CD8-positive, alpha-beta memory T cell (primary cell): ENCODE measurements at regions of chr2 and their contacts with region 1.

Region 1: DNA sequence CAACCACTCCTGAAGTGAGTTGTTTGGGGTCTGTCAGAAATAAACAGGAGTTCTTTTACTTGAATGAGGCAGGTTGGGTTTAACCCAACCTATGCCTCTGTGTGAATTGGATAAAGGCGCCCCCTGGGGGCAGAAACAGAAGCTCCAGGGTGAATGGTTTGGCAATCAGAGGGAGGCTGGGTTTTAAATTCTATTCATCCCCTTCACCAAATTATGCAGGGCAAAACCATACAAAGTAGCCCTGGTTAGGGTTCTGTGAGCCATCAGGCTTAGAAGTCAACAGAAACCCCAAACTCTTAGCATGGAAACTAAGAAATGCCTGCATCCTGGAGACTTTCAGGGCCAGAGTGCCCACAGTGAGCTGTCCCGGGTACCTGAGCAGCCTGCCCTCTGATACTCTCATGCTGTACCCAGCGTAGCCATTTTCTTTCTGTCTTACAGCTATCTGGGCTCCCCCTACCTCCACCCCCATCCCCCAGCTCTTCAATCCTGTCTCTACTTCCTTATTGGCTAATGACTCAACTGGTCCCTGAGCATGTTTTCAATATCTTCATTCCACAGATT is 241.5 kb downstream of the ICOS start:
- DNase-seq: peak; percentile 40 to 74 (median 49)
- H3K4me3 ChIP-seq: no peak overlapping the region
- H3K4me3 Mint-ChIP-seq: no peak overlapping the region
- H3K27ac ChIP-seq: no peak overlapping the region
- H3K27ac Mint-ChIP-seq: no peak overlapping the region
- H3K4me1 ChIP-seq: no peaks in the 10 kb centered on the region
- H3K4me1 Mint-ChIP-seq: no peaks in the 10 kb centered on the region
- H3K27me3 ChIP-seq: no peaks in the 10 kb centered on the region
- H3K27me3 Mint-ChIP-seq: peaks cover 18 to 31% of the 10 kb centered on the region in 2 donors

Region 2: DNA sequence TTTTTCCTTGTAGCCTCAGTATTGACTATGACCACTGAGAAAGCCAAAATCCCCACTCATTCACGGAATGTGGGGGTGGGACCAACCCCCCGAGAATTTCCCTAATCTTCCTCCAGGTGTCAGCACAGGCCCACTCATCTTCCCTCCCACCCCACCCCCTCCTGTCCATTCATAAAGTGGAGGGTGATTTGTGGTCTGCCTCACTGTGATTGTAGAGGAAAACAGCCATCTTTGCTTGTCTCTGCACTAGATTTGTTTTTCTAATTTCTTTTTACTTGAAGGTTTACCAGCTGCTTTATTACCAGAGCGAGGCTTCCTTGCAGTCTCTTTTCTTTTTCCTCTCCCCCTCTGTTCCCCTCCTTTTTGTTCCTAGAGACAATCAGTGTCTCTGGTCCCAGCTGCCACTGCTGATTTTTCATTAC is 69.7 kb before region 1 on chr2:
- CTCF ChIA-PET with region 1: interaction called, 43 read pairs
- POLR2A ChIA-PET with region 1: no interaction called
- DNase-seq: peak; percentile 12 to 54 (median 51)
- H3K4me3 ChIP-seq: peak overlapping the region; percentile 13
- H3K4me3 Mint-ChIP-seq: peak overlapping the region; percentile 40 to 89 (median 81)
- H3K27ac ChIP-seq: no peak overlapping the region
- H3K27ac Mint-ChIP-seq: peak overlapping the region in 3 of 8 donors; percentile 11 to 83 (median 29)
- H3K4me1 ChIP-seq: peaks cover 32% of the 10 kb centered on the region
- H3K4me1 Mint-ChIP-seq: peaks cover 32 to 39% (median 36%) of the 10 kb centered on the region in 3 donors
- H3K27me3 ChIP-seq: peaks cover 3% of the 10 kb centered on the region
- H3K27me3 Mint-ChIP-seq: peaks cover 3 to 13% of the 10 kb centered on the region in 2 donors

Region 3: GRCh38 chr2:204145263-204145751 is 32.8 kb before region 1 on chr2:
- CTCF ChIA-PET with region 1: interaction called, 23 read pairs
- POLR2A ChIA-PET with region 1: no interaction called
- DNase-seq: peak; percentile 55 to 78 (median 65)
- H3K4me3 ChIP-seq: peak overlapping the region; percentile 59
- H3K4me3 Mint-ChIP-seq: peak overlapping the region; percentile 77 to 87 (median 85)
- H3K27ac ChIP-seq: no peak overlapping the region
- H3K27ac Mint-ChIP-seq: peak overlapping the region in 3 of 8 donors; percentile 21 to 62 (median 51)
- H3K4me1 ChIP-seq: no peaks in the 10 kb centered on the region
- H3K4me1 Mint-ChIP-seq: peaks cover 4 to 12% (median 11%) of the 10 kb centered on the region in 3 donors
- H3K27me3 ChIP-seq: no peaks in the 10 kb centered on the region
- H3K27me3 Mint-ChIP-seq: peaks cover 11 to 42% of the 10 kb centered on the region in 2 donors

Region 4: GRCh38 chr2:204166961-204167360 is 11.1 kb before region 1 on chr2:
- CTCF ChIA-PET with region 1: interaction called, 14 read pairs
- POLR2A ChIA-PET with region 1: no interaction called
- DNase-seq: no peak
- H3K4me3 ChIP-seq: no peak overlapping the region
- H3K4me3 Mint-ChIP-seq: no peak overlapping the region
- H3K27ac ChIP-seq: no peak overlapping the region
- H3K27ac Mint-ChIP-seq: no peak overlapping the region
- H3K4me1 ChIP-seq: no peaks in the 10 kb centered on the region
- H3K4me1 Mint-ChIP-seq: no peaks in the 10 kb centered on the region
- H3K27me3 ChIP-seq: peaks cover 5% of the 10 kb centered on the region
- H3K27me3 Mint-ChIP-seq: peaks cover under 1 to 2% of the 10 kb centered on the region in 2 donors

Region 5: GRCh38 chr2:204201507-204201906 is 23.4 kb after region 1 on chr2:
- CTCF ChIA-PET with region 1: no interaction called
- POLR2A ChIA-PET with region 1: no interaction called
- DNase-seq: no peak
- H3K4me3 ChIP-seq: no peak overlapping the region
- H3K4me3 Mint-ChIP-seq: no peak overlapping the region
- H3K27ac ChIP-seq: no peak overlapping the region
- H3K27ac Mint-ChIP-seq: peak overlapping the region in 1 of 8 donors; percentile 43
- H3K4me1 ChIP-seq: no peaks in the 10 kb centered on the region
- H3K4me1 Mint-ChIP-seq: no peaks in the 10 kb centered on the region
- H3K27me3 ChIP-seq: no peaks in the 10 kb centered on the region
- H3K27me3 Mint-ChIP-seq: peaks cover 16 to 32% of the 10 kb centered on the region in 2 donors